CD8-positive, alpha-beta T cell (primary cell): ENCODE measurements at regions of chr7 and their contacts with region 1.

Region 1: GRCh38 chr7:74625446-74625845 is 32.1 kb upstream of the GTF2I start:
- DNase-seq: peak in 2 of 9 experiments; percentile 27 to 50
- ATAC-seq: no peak
- H3K4me3 ChIP-seq: no peak overlapping the region
- H3K4me3 Mint-ChIP-seq: no peak overlapping the region
- H3K27ac ChIP-seq: no peak overlapping the region
- H3K27ac Mint-ChIP-seq: no peak overlapping the region
- H3K4me1 ChIP-seq: no peaks in the 10 kb centered on the region
- H3K4me1 Mint-ChIP-seq: peaks cover 2% of the 10 kb centered on the region
- H3K27me3 ChIP-seq: no peaks in the 10 kb centered on the region
- H3K27me3 Mint-ChIP-seq: no peaks in the 10 kb centered on the region
- CTCF ChIP-seq: peak; percentile 29

Region 2: DNA sequence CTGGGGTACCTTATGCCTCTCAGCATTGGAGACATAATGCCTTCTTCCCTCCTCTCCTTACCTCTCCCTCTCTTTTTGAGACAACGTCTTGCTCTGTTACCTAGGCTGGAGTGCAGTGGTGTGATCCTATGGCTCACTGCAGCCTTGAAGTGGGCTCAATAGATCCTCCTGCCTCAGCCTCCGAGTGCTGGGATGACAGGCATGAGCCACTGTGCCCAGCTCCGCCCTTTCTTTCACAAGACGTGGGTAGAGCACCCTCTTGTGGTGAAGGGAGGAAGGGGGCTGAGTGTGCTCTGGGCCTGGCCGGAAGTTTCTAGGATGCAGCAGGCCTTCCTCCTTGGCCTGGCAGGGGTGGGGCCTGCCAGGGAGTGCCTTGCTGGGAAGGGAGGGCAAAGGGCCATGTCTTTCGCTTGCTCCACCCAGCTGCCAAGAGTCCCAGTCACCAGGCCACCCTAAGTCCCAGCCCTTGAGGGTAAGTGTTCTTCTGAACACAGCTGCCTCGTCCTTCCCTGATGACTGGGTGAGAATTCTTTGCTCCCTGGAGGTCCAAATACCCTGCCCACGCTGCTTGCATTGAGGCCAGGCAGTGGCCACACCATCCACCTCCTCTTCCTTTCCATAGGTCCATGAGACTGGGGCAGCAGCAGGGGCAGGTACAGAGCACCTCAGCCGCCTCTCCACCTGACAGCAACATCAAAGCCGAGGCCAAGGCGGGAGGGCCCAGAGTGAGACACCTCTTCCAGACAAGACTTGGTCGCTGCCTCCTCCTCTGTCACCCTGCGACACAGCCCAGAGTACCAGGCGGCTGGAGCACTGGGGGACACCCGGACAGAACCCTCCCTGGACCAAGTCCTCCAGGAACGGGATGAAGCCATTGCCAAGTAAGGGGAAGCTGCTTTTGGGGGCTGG is 890.6 kb before region 1 on chr7:
- CTCF ChIA-PET with region 1: no interaction called
- POLR2A ChIA-PET with region 1: no interaction called
- intact Hi-C with region 1: no loop called
- DNase-seq: peak; percentile 64 to 90 (median 83)
- ATAC-seq: peak; percentile 48
- H3K4me3 ChIP-seq: no peak overlapping the region
- H3K4me3 Mint-ChIP-seq: no peak overlapping the region
- H3K27ac ChIP-seq: peak overlapping the region in 1 of 2 experiments; percentile 41
- H3K27ac Mint-ChIP-seq: peak overlapping the region; percentile 86
- H3K4me1 ChIP-seq: peaks cover 17% of the 10 kb centered on the region
- H3K4me1 Mint-ChIP-seq: peaks cover 13% of the 10 kb centered on the region
- H3K27me3 ChIP-seq: no peaks in the 10 kb centered on the region
- H3K27me3 Mint-ChIP-seq: no peaks in the 10 kb centered on the region
- CTCF ChIP-seq: peak; percentile 78

Region 3: GRCh38 chr7:74587435-74588126 is 37.9 kb before region 1 on chr7:
- CTCF ChIA-PET with region 1: no interaction called
- POLR2A ChIA-PET with region 1: no interaction called
- intact Hi-C with region 1: no loop called
- DNase-seq: no peak
- ATAC-seq: no peak
- H3K4me3 ChIP-seq: no peak overlapping the region
- H3K4me3 Mint-ChIP-seq: no peak overlapping the region
- H3K27ac ChIP-seq: no peak overlapping the region
- H3K27ac Mint-ChIP-seq: no peak overlapping the region
- H3K4me1 ChIP-seq: no peaks in the 10 kb centered on the region
- H3K4me1 Mint-ChIP-seq: no peaks in the 10 kb centered on the region
- H3K27me3 ChIP-seq: no peaks in the 10 kb centered on the region
- H3K27me3 Mint-ChIP-seq: no peaks in the 10 kb centered on the region
- CTCF ChIP-seq: no peak

Region 4: DNA sequence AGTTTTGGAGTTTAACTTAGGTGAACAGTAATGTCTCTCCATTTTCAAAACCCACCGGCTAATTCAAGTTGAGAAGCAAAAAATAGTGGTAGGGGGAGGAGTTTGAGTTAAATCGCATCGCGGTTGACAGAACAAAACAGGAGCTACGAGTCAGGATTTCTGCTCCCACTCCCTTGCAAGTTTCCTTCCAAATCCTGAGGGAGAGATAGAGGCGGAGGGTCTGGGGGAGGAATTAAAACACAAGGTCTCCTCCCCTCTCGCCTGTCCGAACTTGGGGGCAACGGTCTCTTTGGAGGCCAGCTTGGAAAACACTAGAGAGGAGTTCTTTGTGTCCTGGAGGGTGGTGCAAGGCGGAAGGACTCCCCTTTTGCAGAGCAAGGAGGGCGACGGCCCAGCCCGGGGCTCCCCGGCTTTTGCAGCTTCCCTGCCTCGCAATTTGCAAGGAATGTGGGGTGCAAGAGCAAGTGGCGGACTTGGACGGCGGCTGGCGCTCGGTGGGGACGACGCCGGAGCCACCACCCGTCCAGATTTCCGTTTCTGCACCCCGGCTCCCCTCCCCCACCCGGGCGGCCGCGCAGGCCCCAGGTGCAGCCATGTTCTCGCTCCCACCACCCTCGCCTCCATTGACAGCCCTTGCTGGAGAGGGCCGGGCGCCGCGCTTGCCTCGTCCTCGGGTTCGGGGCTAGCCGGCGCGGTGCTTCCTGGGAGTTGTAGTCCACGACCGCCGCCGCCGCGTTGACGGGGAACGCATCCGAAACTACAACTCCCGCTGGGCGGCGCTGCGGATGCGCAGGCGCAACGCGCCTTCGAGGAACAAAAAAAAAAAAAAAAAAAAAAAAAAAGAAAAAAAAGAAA is 31.6 kb after region 1 on chr7:
- CTCF ChIA-PET with region 1: no interaction called
- POLR2A ChIA-PET with region 1: no interaction called
- intact Hi-C with region 1: loop called in 1 of 2 experiments (anchors 2 kb)
- DNase-seq: peak; percentile 95 to 99 (median 98)
- ATAC-seq: peak; percentile 74
- H3K4me3 ChIP-seq: peak overlapping the region; percentile 77 to 88
- H3K4me3 Mint-ChIP-seq: peak overlapping the region; percentile 88
- H3K27ac ChIP-seq: peak overlapping the region; percentile 54 to 69
- H3K27ac Mint-ChIP-seq: peak overlapping the region; percentile 85
- H3K4me1 ChIP-seq: peaks cover 33% of the 10 kb centered on the region
- H3K4me1 Mint-ChIP-seq: peaks cover 45% of the 10 kb centered on the region
- H3K27me3 ChIP-seq: no peaks in the 10 kb centered on the region
- H3K27me3 Mint-ChIP-seq: no peaks in the 10 kb centered on the region
- CTCF ChIP-seq: no peak

Region 5: DNA sequence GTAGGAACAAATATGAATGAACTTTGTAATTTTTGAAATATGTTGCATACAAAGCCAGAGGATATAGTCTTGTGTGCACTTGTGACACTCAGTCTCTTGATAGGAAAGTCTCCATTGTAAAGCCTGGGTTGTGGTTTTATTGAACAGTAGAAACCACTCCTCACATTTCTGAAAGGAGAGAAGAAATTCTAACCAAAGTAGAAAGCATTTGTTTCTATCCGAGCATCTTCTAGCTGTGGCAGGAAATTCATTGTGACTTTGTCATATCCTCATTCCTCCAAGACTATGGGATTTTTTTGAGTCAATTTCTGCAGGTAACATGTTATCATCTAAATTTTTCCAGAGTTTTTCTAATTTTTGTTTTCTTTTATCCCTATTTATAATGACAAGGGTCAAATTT is 92.9 kb after region 1 on chr7:
- CTCF ChIA-PET with region 1: no interaction called
- POLR2A ChIA-PET with region 1: no interaction called
- intact Hi-C with region 1: loop called in 1 of 2 experiments (anchors 5 kb)
- DNase-seq: no peak
- ATAC-seq: no peak
- H3K4me3 ChIP-seq: no peak overlapping the region
- H3K4me3 Mint-ChIP-seq: no peak overlapping the region
- H3K27ac ChIP-seq: no peak overlapping the region
- H3K27ac Mint-ChIP-seq: peak overlapping the region; percentile 7
- H3K4me1 ChIP-seq: no peaks in the 10 kb centered on the region
- H3K4me1 Mint-ChIP-seq: peaks cover 2% of the 10 kb centered on the region
- H3K27me3 ChIP-seq: no peaks in the 10 kb centered on the region
- H3K27me3 Mint-ChIP-seq: no peaks in the 10 kb centered on the region
- CTCF ChIP-seq: no peak